Panc1 (cell line): ENCODE measurements at regions of chr7 and their contacts with region 1.

Region 1: GRCh38 chr7:18305866-18306265 is 189.7 kb upstream of the HDAC9 start:
- DNase-seq: no peak
- ATAC-seq: no peak
- H3K4me3 ChIP-seq: no peak overlapping the region
- H3K27ac ChIP-seq: no peak overlapping the region
- H3K4me1 ChIP-seq: no peaks in the 10 kb centered on the region
- H3K27me3 ChIP-seq: no peaks in the 10 kb centered on the region; the same call in 1 of the 2 replicates
- CTCF ChIP-seq: no peak

Region 2: DNA sequence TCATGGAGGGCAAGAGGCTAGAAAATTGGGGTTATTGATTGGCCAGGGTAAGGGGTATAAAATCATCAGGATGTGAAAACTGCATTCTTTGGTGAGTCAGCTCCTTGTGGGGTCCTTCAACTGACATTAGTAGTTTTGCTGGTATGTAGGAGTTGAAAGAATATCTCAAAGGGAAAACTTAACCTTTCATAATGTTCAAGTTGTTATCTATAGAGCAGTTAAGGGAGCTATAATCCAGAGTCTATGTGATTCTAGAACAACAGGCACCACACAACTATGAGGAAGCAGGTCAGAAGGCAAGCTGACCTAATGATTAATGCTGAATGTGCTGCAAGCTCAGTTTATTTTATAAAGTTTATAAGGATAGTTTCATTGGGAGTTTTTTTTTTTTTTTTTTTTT is 291.9 kb before region 1 on chr7:
- CTCF ChIA-PET with region 1: no interaction called
- POLR2A ChIA-PET with region 1: no interaction called
- in situ Hi-C with region 1: no loop called
- intact Hi-C with region 1: no loop called
- DNase-seq: no peak
- ATAC-seq: no peak
- H3K4me3 ChIP-seq: no peak overlapping the region
- H3K27ac ChIP-seq: no peak overlapping the region
- H3K4me1 ChIP-seq: no peaks in the 10 kb centered on the region
- H3K27me3 ChIP-seq: no peaks in the 10 kb centered on the region
- CTCF ChIP-seq: no peak

Region 3: GRCh38 chr7:18320971-18321567 is 15.2 kb after region 1 on chr7:
- CTCF ChIA-PET with region 1: interaction called, 11 read pairs
- POLR2A ChIA-PET with region 1: no interaction called
- in situ Hi-C with region 1: no loop called
- intact Hi-C with region 1: no loop called
- DNase-seq: peak; percentile 38
- ATAC-seq: peak; percentile 71
- H3K4me3 ChIP-seq: no peak overlapping the region
- H3K27ac ChIP-seq: no peak overlapping the region
- H3K4me1 ChIP-seq: no peaks in the 10 kb centered on the region
- H3K27me3 ChIP-seq: no peaks in the 10 kb centered on the region
- CTCF ChIP-seq: peak; percentile 72